HCT116 (cell line): ENCODE measurements at regions of chr11 and their contacts with region 1.

Region 1: GRCh38 chr11:8263769-8264410 is at the start of gene LMO1:
- DNase-seq: peak; percentile 44
- ATAC-seq: peak; percentile 95
- H3K4me3 ChIP-seq: 0 out of 4 replicates have a peak within 1 kb of the TSS, but pooled peaks of 1 of the 2 experiments have one; percentile 5
- H3K27ac ChIP-seq: no peak within 1 kb of the TSS
- H3K4me1 ChIP-seq: peaks cover 5 to 8% of the 10 kb centered on the region in 2 experiments; a peak in 2 of 4 replicates
- H3K27me3 ChIP-seq: no peaks in the 10 kb centered on the region
- CTCF ChIP-seq: peak; percentile 73 to 94 (median 85)
- POLR2A ChIP-seq: no peak
- RAD21 ChIP-seq: peak; percentile 71
- total RNA-seq, gene LMO1: 0.27 TPM

Region 2: GRCh38 chr11:8126649-8127289 is 137.1 kb before region 1 on chr11:
- CTCF ChIA-PET with region 1: no interaction called
- POLR2A ChIA-PET with region 1: no interaction called
- RAD21 ChIA-PET with region 1: no interaction called
- intact Hi-C with region 1: no loop called
- DNase-seq: no peak
- ATAC-seq: no peak
- H3K4me3 ChIP-seq: no peak overlapping the region
- H3K27ac ChIP-seq: no peak overlapping the region
- H3K4me1 ChIP-seq: no peaks in the 10 kb centered on the region
- H3K27me3 ChIP-seq: no peaks in the 10 kb centered on the region
- CTCF ChIP-seq: no peak
- POLR2A ChIP-seq: no peak
- RAD21 ChIP-seq: no peak

Region 3: GRCh38 chr11:8149726-8150125 is 114.2 kb before region 1 on chr11:
- CTCF ChIA-PET with region 1: no interaction called
- POLR2A ChIA-PET with region 1: no interaction called
- RAD21 ChIA-PET with region 1: no interaction called
- intact Hi-C with region 1: no loop called
- DNase-seq: no peak
- ATAC-seq: no peak
- H3K4me3 ChIP-seq: no peak overlapping the region
- H3K27ac ChIP-seq: no peak overlapping the region
- H3K4me1 ChIP-seq: no peaks in the 10 kb centered on the region
- H3K27me3 ChIP-seq: no peaks in the 10 kb centered on the region
- CTCF ChIP-seq: no peak
- POLR2A ChIP-seq: no peak
- RAD21 ChIP-seq: no peak

Region 4: GRCh38 chr11:8225589-8226036 is 38.3 kb before region 1 on chr11:
- CTCF ChIA-PET with region 1: no interaction called
- POLR2A ChIA-PET with region 1: no interaction called
- RAD21 ChIA-PET with region 1: no interaction called
- intact Hi-C with region 1: loop called (anchors 2 kb)
- DNase-seq: peak; percentile 42
- ATAC-seq: peak; percentile 88
- H3K4me3 ChIP-seq: no peak overlapping the region
- H3K27ac ChIP-seq: no peak overlapping the region
- H3K4me1 ChIP-seq: peaks cover 0 to 3% of the 10 kb centered on the region in 2 experiments; a peak in 1 of 4 replicates
- H3K27me3 ChIP-seq: no peaks in the 10 kb centered on the region
- CTCF ChIP-seq: peak; percentile 89 to 95 (median 92)
- POLR2A ChIP-seq: no peak
- RAD21 ChIP-seq: peak; percentile 96

Region 5: DNA sequence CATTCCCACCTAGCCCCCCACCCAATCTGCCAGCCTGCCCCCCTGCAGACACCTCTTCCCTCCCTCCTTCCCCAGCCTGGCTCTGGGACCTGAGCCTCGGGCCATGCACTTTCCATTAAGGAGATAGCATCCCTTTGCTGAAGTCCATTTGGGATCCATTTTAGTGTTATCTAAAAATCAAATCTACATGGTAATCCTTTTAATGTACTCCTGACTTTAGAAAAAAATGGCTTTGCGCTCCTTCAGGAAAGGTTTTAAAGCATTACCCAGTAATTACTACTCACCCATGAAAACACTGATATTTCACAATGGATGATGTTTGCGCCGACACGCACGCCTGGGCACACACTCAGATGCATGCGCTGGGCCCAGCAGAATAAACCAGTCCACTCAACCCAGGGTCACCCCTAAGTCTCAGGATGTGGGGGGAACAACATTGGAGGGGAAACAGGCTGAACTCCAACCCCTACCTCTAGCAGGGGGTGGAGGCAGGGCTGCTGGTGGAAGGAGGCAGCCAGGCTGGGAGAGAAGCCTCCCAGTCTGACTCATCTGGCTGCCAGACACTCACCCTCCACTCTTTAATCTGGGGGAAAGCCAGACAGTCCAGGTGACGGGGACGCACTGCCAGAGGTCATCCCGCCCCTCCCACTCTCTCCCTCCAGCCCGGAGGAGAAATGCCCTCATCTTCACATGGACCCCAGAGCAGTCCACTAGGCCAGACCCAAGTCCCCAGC is 30.0 kb before region 1 on chr11:
- CTCF ChIA-PET with region 1: interaction called, 10 read pairs
- POLR2A ChIA-PET with region 1: no interaction called
- RAD21 ChIA-PET with region 1: interaction called in 1 of 2 experiments, 3 read pairs
- intact Hi-C with region 1: no loop called
- DNase-seq: no peak
- ATAC-seq: peak; percentile 46
- H3K4me3 ChIP-seq: no peak overlapping the region
- H3K27ac ChIP-seq: no peak overlapping the region; the same call in 1 of the 2 replicates
- H3K4me1 ChIP-seq: peaks cover 9 to 14% of the 10 kb centered on the region in 2 experiments; a peak in 3 of 4 replicates
- H3K27me3 ChIP-seq: no peaks in the 10 kb centered on the region
- CTCF ChIP-seq: no peak
- POLR2A ChIP-seq: no peak
- RAD21 ChIP-seq: no peak

Region 6: GRCh38 chr11:8247312-8247711 is 16.6 kb before region 1 on chr11:
- CTCF ChIA-PET with region 1: interaction called, 22 read pairs
- POLR2A ChIA-PET with region 1: no interaction called
- RAD21 ChIA-PET with region 1: interaction called in 1 of 2 experiments, 3 read pairs
- intact Hi-C with region 1: no loop called
- DNase-seq: no peak
- ATAC-seq: peak; percentile 91
- H3K4me3 ChIP-seq: no peak overlapping the region
- H3K27ac ChIP-seq: no peak overlapping the region
- H3K4me1 ChIP-seq: peaks cover 0 to 11% of the 10 kb centered on the region in 2 experiments; a peak in 2 of 4 replicates
- H3K27me3 ChIP-seq: no peaks in the 10 kb centered on the region
- CTCF ChIP-seq: peak; percentile 63 to 81 (median 72); a peak in 5 of 6 replicates
- POLR2A ChIP-seq: no peak
- RAD21 ChIP-seq: peak; percentile 78

Region 7: DNA sequence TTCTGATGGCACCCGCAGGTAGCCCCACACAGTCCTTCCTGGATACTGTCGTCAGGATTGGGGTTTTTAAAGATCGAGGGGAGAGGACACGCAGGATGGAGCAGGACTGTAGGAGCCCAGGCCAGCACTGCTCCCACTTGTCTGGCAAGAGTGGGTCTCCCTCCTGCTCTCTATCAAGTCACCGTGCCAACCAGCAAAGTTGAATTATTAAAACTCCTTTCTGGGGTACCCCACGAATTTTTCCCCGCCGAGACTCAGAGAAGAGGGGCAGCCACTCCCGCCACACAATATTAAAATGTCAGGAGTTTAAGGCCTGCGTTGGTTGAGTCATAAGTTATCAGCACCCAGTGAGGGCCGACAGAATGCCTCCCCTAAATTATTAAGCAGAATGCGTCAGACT is 10.3 kb before region 1 on chr11:
- CTCF ChIA-PET with region 1: interaction called, 22 read pairs
- POLR2A ChIA-PET with region 1: no interaction called
- RAD21 ChIA-PET with region 1: no interaction called
- intact Hi-C with region 1: no loop called
- DNase-seq: no peak
- ATAC-seq: no peak
- H3K4me3 ChIP-seq: no peak overlapping the region
- H3K27ac ChIP-seq: no peak overlapping the region
- H3K4me1 ChIP-seq: peaks cover 0 to 16% of the 10 kb centered on the region in 2 experiments; a peak in 2 of 4 replicates
- H3K27me3 ChIP-seq: no peaks in the 10 kb centered on the region
- CTCF ChIP-seq: no peak
- POLR2A ChIP-seq: no peak
- RAD21 ChIP-seq: no peak